H1 (cell line): ENCODE measurements at regions of chr18 and their contacts with region 1.

Region 1: GRCh38 chr18:46084431-46084830 is 12.4 kb upstream of the PSTPIP2 start:
- DNase-seq: no peak
- H3K4me3 ChIP-seq: no peak overlapping the region
- H3K27ac ChIP-seq: no peak overlapping the region
- H3K4me1 ChIP-seq: no peaks in the 10 kb centered on the region
- H3K27me3 ChIP-seq: no peaks in the 10 kb centered on the region
- CTCF ChIP-seq: no peak
- EP300 ChIP-seq: no peak
- POLR2A ChIP-seq: no peak
- RAD21 ChIP-seq: no peak

Region 2: GRCh38 chr18:46095532-46095931 is 11.1 kb after region 1 on chr18:
- CTCF ChIA-PET with region 1: interaction called, 4 read pairs
- POLR2A ChIA-PET with region 1: interaction called, 30 read pairs
- DNase-seq: no peak
- H3K4me3 ChIP-seq: no peak overlapping the region
- H3K27ac ChIP-seq: no peak overlapping the region
- H3K4me1 ChIP-seq: peaks cover 0 to 3% (median 2%) of the 10 kb centered on the region in 4 experiments; a peak in 6 of 7 replicates
- H3K27me3 ChIP-seq: no peaks in the 10 kb centered on the region
- CTCF ChIP-seq: no peak
- EP300 ChIP-seq: no peak
- POLR2A ChIP-seq: no peak
- RAD21 ChIP-seq: no peak